GM18951 (cell line): ENCODE measurements at regions of chr9 and their contacts with region 1.

Region 1: GRCh38 chr9:130707225-130707976 is 13.8 kb downstream of the EXOSC2 start:
- POLR2A ChIP-seq: no peak

Region 2: GRCh38 chr9:130938652-130939404 is 231.4 kb after region 1 on chr9 and contains the start of gene FIBCD1:
- in situ Hi-C with region 1: loop called (anchors 5 kb)
- POLR2A ChIP-seq: no peak